HepG2 (cell line): ENCODE measurements at regions of chr6 and their contacts with region 1.

Region 1: GRCh38 chr6:26156076-26156849 is 69.0 kb downstream of the HFE start:
- DNase-seq: peak; percentile 88
- ATAC-seq: peak; percentile 77
- H3K4me3 ChIP-seq: peak overlapping the region; percentile 94 to 96 (median 95)
- H3K27ac ChIP-seq: peak overlapping the region; percentile 95
- H3K4me1 ChIP-seq: peaks cover 40% of the 10 kb centered on the region
- H3K27me3 ChIP-seq: no peaks in the 10 kb centered on the region; a peak in 1 of 5 replicates
- CTCF ChIP-seq: peak; percentile 37
- EP300 ChIP-seq: peak; percentile 7 to 60; a peak in 1 of 4 replicates
- POLR2A ChIP-seq: peak; percentile 99
- RAD21 ChIP-seq: peak; percentile 69

Region 2: DNA sequence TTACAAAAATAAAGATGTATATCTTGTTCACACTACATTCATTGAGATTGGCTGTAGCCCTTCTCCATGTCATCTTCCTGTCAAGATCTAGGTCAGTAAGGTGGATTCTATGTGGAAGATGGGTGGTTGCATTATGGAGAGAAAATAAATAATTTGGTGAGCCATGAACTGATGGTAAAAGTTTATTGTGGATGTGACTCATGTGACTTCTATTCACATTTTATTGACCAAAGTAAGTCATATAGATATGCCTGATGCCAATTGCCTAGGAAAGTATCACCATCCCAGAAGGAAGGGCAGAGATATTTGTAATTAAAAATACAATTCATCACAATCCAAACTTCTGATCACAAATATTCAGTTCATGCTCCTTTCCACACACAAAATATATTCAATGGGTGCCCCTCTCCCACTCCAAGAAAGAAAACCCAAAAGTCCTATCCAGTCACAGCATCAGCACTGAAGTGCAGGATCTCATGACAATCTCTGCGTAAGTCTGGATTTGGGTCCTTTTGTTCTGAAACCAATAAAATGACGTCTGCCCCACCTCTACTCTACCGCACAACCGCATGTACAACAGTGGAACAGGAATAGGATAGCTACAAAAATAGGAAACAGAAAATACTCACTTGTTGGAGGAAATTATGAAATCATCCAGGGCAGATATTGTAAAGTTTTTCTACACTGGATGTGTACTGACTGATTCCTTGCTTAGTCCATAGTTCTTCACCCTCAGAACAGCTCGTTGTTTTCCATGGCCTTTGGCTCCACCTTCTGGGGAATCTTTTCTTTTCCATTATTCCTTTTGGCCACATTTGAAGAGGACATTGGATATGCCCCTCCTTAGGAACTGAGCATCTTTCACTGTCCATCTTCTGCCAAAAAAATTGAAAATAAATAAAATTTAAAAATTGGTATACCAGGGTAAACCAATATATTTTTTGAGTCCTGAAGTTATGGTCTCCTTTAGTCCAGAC is 266.1 kb before region 1 on chr6:
- CTCF ChIA-PET with region 1: no interaction called
- POLR2A ChIA-PET with region 1: no interaction called
- in situ Hi-C with region 1: no loop called
- intact Hi-C with region 1: no loop called
- DNase-seq: peak; percentile 70
- ATAC-seq: peak; percentile 95
- H3K4me3 ChIP-seq: no peak overlapping the region
- H3K27ac ChIP-seq: no peak overlapping the region
- H3K4me1 ChIP-seq: peaks cover 14% of the 10 kb centered on the region
- H3K27me3 ChIP-seq: no peaks in the 10 kb centered on the region
- CTCF ChIP-seq: peak; percentile 91
- EP300 ChIP-seq: no peak
- POLR2A ChIP-seq: no peak
- RAD21 ChIP-seq: peak; percentile 90

Region 3: GRCh38 chr6:25942561-25943147 is 213.6 kb before region 1 on chr6:
- CTCF ChIA-PET with region 1: no interaction called
- POLR2A ChIA-PET with region 1: no interaction called
- in situ Hi-C with region 1: no loop called
- intact Hi-C with region 1: no loop called
- DNase-seq: peak; percentile 76
- ATAC-seq: peak; percentile 93
- H3K4me3 ChIP-seq: no peak overlapping the region
- H3K27ac ChIP-seq: no peak overlapping the region
- H3K4me1 ChIP-seq: peaks cover 34% of the 10 kb centered on the region
- H3K27me3 ChIP-seq: no peaks in the 10 kb centered on the region
- CTCF ChIP-seq: peak; percentile 92
- EP300 ChIP-seq: no peak; a peak in 1 of 4 replicates
- POLR2A ChIP-seq: no peak
- RAD21 ChIP-seq: peak; percentile 89

Region 4: GRCh38 chr6:26031595-26032339 is 124.5 kb before region 1 on chr6:
- CTCF ChIA-PET with region 1: no interaction called
- POLR2A ChIA-PET with region 1: interaction called, 69 read pairs
- in situ Hi-C with region 1: no loop called
- intact Hi-C with region 1: loop called (anchors 2 kb)
- DNase-seq: peak; percentile 100
- ATAC-seq: peak; percentile 79
- H3K4me3 ChIP-seq: peak overlapping the region; percentile 71 to 83 (median 82)
- H3K27ac ChIP-seq: peak overlapping the region; percentile 93
- H3K4me1 ChIP-seq: peaks cover 37% of the 10 kb centered on the region
- H3K27me3 ChIP-seq: no peaks in the 10 kb centered on the region; a peak in 1 of 5 replicates
- CTCF ChIP-seq: peak; percentile 52
- EP300 ChIP-seq: peak; percentile 40 to 80; a peak in 2 of 4 replicates
- POLR2A ChIP-seq: peak; percentile 99
- RAD21 ChIP-seq: peak; percentile 61

Region 5: GRCh38 chr6:26054857-26055669 is 101.2 kb before region 1 on chr6:
- CTCF ChIA-PET with region 1: no interaction called
- POLR2A ChIA-PET with region 1: interaction called, 15 read pairs
- in situ Hi-C with region 1: no loop called
- intact Hi-C with region 1: no loop called
- DNase-seq: peak; percentile 97
- ATAC-seq: peak; percentile 82
- H3K4me3 ChIP-seq: peak overlapping the region; percentile 69 to 85 (median 85)
- H3K27ac ChIP-seq: peak overlapping the region; percentile 90
- H3K4me1 ChIP-seq: peaks cover 26% of the 10 kb centered on the region
- H3K27me3 ChIP-seq: no peaks in the 10 kb centered on the region; a peak in 1 of 5 replicates
- CTCF ChIP-seq: peak; percentile 32; the same call in 1 of the 2 replicates
- EP300 ChIP-seq: peak in 1 of 2 experiments; percentile 27; a peak in 1 of 4 replicates
- POLR2A ChIP-seq: peak; percentile 79 to 98; a peak in 3 of 4 replicates
- RAD21 ChIP-seq: peak; percentile 50

Region 6: DNA sequence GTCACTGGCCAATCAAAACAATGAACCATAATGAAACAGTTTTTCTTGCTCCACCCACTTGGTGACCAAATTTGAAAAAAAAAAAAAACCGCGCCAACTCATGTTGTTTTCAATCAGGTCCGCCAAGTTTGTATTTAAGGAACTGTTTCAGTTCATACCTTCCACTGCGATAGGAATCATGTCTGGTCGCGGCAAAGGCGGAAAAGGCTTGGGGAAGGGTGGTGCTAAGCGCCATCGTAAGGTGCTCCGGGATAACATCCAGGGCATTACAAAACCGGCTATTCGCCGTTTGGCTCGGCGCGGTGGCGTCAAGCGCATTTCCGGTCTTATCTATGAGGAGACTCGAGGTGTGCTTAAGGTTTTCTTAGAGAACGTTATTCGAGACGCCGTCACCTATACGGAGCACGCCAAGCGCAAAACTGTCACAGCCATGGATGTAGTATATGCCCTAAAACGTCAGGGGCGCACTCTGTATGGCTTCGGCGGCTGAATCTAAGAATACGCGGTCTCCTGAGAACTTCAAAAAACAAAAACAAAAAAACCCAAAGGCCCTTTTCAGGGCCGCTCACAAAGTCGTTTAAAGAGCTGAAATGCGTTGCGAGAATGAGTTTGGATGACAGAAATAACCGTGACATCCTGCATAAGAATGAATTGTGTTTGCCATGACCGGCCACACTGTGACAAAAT is 52.4 kb before region 1 on chr6:
- CTCF ChIA-PET with region 1: no interaction called
- POLR2A ChIA-PET with region 1: interaction called, 92 read pairs
- in situ Hi-C with region 1: no loop called
- intact Hi-C with region 1: loop called (anchors 1 kb)
- DNase-seq: peak; percentile 96
- ATAC-seq: peak; percentile 84
- H3K4me3 ChIP-seq: peak overlapping the region; percentile 64 to 79 (median 74)
- H3K27ac ChIP-seq: peak overlapping the region; percentile 92
- H3K4me1 ChIP-seq: peaks cover 29% of the 10 kb centered on the region
- H3K27me3 ChIP-seq: no peaks in the 10 kb centered on the region; a peak in 1 of 5 replicates
- CTCF ChIP-seq: peak; percentile 45
- EP300 ChIP-seq: peak; percentile 69 to 96; a peak in 3 of 4 replicates
- POLR2A ChIP-seq: peak; percentile 98 to 99
- RAD21 ChIP-seq: peak; percentile 52; the same call in 1 of the 2 replicates

Region 7: DNA sequence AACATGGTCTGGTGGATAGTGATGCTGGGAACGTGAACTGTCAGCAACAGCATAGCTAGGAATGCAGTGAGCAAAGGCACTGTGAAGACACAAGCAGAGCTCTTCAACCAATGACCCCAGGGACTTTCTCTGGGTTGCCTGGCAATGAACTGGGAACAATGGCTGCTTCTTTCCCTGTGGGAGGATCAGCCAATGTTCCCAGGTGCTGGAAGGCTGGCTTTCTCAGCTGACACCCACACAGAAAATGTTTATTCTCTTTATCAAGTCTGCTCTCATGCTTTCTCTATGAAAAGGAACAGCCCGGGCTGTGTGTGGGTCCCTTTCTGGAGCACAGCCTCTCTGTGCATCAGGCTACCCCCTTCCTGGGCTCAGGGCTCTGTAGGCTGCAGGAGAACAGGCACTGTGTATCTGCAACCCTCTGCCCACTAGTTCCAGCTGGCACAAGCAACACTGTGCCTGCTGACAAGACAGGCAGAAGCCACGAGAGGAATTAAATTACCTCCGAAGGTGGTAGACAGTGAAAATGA is 14.8 kb before region 1 on chr6:
- CTCF ChIA-PET with region 1: no interaction called
- POLR2A ChIA-PET with region 1: interaction called, 41 read pairs
- in situ Hi-C with region 1: no loop called
- intact Hi-C with region 1: no loop called
- DNase-seq: peak; percentile 46
- ATAC-seq: peak; percentile 77
- H3K4me3 ChIP-seq: no peak overlapping the region
- H3K27ac ChIP-seq: no peak overlapping the region
- H3K4me1 ChIP-seq: peaks cover 29% of the 10 kb centered on the region
- H3K27me3 ChIP-seq: no peaks in the 10 kb centered on the region
- CTCF ChIP-seq: no peak
- EP300 ChIP-seq: no peak
- POLR2A ChIP-seq: no peak
- RAD21 ChIP-seq: no peak

Region 8: DNA sequence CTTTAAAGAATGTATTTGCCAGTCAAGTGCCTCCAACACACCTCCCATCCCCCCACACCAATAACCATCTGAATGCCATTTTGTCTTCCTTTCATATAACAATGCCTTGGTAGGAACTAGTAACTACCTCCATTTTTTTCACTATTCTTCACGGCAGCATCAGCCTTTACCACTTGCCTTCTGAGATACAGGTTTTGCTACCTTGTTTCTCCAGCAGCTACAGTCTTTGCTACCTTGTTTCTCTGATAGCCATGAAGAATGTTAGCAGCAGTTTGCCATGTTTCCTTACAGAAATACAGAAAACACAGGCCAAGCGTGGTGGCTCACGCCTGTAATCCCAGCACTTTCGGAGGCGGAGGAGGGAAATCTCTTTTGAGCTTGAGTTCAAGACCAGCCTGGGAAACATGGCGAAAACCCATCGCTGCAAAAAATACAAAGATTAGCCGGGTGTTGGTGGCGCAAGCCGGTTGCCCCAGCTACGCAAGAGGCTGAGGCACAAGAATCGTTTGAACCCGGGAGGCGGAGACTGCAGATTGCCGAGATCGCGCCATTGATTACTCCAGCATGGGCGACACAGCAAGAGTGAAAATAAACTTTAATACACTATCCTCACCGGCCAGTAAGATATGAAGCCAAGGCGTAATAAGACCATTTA is 31.8 kb after region 1 on chr6:
- CTCF ChIA-PET with region 1: no interaction called
- POLR2A ChIA-PET with region 1: interaction called, 318 read pairs
- in situ Hi-C with region 1: no loop called
- intact Hi-C with region 1: no loop called
- DNase-seq: peak; percentile 76
- ATAC-seq: peak; percentile 63
- H3K4me3 ChIP-seq: peak overlapping the region; percentile 60 to 77 (median 62)
- H3K27ac ChIP-seq: peak overlapping the region; percentile 82
- H3K4me1 ChIP-seq: peaks cover 18% of the 10 kb centered on the region
- H3K27me3 ChIP-seq: no peaks in the 10 kb centered on the region
- CTCF ChIP-seq: no peak
- EP300 ChIP-seq: no peak
- POLR2A ChIP-seq: no peak
- RAD21 ChIP-seq: no peak

Region 9: DNA sequence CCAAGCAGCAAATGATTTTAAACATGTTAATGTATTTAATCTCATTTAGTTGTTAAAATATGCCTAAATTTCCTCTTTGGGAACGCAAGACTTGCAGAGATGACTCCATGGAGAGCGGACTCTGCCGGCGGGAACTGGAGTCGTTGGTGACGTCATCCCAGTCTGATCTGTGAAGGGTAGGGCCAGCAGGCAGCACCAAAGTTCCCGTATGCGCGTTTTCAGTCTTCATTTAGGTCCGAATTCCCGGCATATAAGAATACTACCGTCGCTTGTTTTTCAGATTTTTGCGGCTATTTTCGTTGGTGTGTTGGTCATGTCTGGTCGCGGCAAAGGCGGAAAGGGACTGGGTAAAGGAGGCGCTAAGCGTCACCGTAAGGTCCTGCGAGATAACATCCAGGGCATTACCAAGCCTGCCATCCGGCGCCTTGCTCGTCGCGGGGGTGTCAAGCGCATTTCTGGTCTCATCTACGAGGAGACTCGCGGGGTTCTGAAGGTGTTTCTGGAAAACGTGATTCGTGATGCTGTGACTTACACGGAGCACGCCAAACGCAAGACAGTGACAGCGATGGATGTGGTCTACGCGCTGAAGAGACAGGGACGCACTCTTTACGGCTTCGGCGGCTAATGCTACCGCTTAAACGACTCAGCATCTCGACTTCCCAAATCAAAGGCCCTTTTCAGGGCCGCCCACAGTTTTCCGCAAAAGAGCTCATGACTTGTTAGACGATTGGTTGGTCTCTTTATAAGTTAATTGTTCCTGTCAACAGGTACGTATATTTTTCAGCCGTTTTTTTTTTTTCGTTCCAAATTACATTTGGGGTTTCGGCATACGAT is 48.3 kb after region 1 on chr6:
- CTCF ChIA-PET with region 1: no interaction called
- POLR2A ChIA-PET with region 1: interaction called, 318 read pairs
- in situ Hi-C with region 1: no loop called
- intact Hi-C with region 1: loop called (anchors 1 kb)
- DNase-seq: peak; percentile 98
- ATAC-seq: peak; percentile 75
- H3K4me3 ChIP-seq: peak overlapping the region; percentile 62 to 95 (median 77)
- H3K27ac ChIP-seq: peak overlapping the region; percentile 87
- H3K4me1 ChIP-seq: peaks cover 36% of the 10 kb centered on the region
- H3K27me3 ChIP-seq: no peaks in the 10 kb centered on the region; a peak in 1 of 5 replicates
- CTCF ChIP-seq: peak; percentile 53
- EP300 ChIP-seq: peak in 1 of 2 experiments; percentile 89; a peak in 3 of 4 replicates
- POLR2A ChIP-seq: peak; percentile 98 to 99
- RAD21 ChIP-seq: no peak; the same call in 1 of the 2 replicates